MCF 10A (cell line): ENCODE measurements at regions of chr18 and their contacts with region 1.

Region 1: GRCh38 chr18:9102508-9103375 is at the start of gene NDUFV2:
- DNase-seq: peak; percentile 96
- H3K4me3 Mint-ChIP-seq: peak within 1 kb of the TSS; percentile 80
- H3K27ac Mint-ChIP-seq: peak within 1 kb of the TSS; percentile 86
- H3K4me1 Mint-ChIP-seq: peaks cover 43% of the 10 kb centered on the region
- H3K27me3 Mint-ChIP-seq: no peaks in the 10 kb centered on the region
- CTCF ChIP-seq: no peak
- total RNA-seq, gene NDUFV2: 192 and 202 TPM in 2 replicates

Region 2: DNA sequence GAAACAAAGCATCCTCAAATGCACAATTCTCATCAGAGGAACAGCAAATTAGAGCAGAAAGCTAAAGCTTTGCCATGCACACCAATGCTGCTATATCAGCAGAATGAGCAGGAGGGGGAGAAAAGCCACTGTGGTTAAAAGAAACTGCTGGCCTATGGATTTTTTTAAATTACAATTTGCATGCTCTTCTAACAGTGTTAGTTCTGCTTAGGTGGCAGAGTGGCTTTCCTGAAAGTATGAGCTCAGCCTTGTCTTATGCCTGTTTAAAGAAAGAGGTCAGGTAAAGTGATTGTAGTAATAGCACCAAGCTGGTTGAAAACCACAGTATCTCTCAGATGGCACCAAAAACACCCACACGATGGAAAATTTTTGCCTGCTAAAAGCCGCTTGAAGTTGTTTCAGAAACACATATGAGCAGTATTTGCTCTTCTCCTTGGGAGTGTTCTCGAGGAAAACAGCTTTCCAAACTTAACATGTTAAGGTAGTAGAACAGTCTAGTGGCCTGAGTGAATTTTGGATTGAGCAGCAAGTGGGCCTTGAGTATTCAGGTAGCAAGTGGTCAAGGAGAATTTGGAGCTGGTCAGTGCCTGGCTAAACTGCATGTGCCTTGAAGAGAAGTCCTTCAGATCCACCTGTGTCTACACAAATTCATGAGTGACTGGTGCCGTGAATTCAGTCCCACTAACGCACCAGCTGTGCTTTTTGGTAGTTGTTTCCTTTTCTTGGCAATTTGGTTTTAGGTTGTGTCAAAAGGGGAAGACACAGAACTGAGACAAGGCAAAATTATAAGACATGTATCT is 19.8 kb before region 1 on chr18:
- CTCF ChIA-PET with region 1: no interaction called
- POLR2A ChIA-PET with region 1: interaction called, 12 read pairs
- intact Hi-C with region 1: no loop called
- DNase-seq: no peak
- H3K4me3 Mint-ChIP-seq: no peak overlapping the region
- H3K27ac Mint-ChIP-seq: no peak overlapping the region
- H3K4me1 Mint-ChIP-seq: no peaks in the 10 kb centered on the region
- H3K27me3 Mint-ChIP-seq: no peaks in the 10 kb centered on the region
- CTCF ChIP-seq: no peak

Region 3: DNA sequence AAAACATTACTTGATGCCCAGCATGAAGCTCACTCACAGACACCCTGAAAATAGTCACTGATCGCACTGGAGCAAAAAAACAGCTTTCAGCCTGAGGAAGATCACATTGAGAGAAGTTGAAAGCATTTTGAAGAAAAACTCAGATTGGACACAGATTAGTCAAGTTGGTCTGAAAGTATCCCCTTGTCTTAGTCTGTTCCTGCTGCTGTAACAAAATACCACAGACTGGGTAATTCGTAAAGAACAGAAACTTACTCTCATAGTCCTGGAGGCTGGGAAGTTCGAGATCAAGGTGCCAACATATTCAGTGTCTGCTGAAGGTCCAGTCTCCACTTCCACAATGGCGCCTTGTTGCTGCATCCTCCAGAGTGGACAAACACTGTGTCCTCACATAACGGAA is 14.5 kb before region 1 on chr18:
- CTCF ChIA-PET with region 1: no interaction called
- POLR2A ChIA-PET with region 1: interaction called, 12 read pairs
- intact Hi-C with region 1: no loop called
- DNase-seq: no peak
- H3K4me3 Mint-ChIP-seq: no peak overlapping the region
- H3K27ac Mint-ChIP-seq: no peak overlapping the region
- H3K4me1 Mint-ChIP-seq: no peaks in the 10 kb centered on the region
- H3K27me3 Mint-ChIP-seq: no peaks in the 10 kb centered on the region
- CTCF ChIP-seq: no peak

Region 4: DNA sequence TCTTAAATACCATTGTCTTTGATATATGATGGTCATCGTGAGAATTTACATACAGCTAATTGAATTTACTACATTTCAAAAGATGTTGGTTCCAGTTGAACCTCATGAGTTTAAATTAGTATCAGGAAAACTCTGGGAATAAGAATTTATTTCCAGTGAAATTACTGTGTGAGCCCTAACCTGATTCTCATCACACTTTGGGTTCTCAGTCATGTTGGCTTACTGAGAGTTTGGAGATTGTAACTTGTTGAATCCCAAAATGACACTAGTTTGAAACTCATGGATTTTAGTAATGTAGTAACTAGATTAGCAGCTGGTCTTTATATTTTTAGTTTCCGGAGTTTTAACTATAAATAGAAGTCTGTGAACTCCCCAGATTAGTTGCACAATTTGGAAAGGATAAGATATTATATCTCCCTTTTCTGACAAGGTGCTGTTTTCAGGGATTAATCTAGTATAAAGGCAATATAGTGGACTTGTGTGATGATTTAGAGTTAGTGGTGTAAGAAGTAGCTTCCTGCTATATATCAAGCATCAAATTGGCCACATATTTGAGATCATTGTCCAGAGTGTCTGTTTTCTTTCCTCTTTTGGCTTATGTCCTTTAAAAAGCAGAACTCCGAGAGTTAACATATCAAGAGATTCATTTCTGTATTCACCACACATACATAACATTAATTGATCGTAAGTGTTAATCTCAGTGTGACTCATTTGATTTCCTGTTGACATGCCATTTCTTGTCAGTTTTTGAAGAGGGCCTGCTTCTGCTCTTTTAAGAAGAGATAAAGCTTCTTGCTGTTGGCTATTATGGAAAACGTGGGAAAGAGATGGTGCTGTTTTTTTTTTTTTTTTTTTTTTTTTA is 15.5 kb after region 1 on chr18:
- CTCF ChIA-PET with region 1: interaction called, 3 read pairs
- POLR2A ChIA-PET with region 1: interaction called, 228 read pairs
- intact Hi-C with region 1: loop called (anchors 2 kb)
- DNase-seq: peak; percentile 44
- H3K4me3 Mint-ChIP-seq: peak overlapping the region; percentile 52
- H3K27ac Mint-ChIP-seq: peak overlapping the region; percentile 98
- H3K4me1 Mint-ChIP-seq: peaks cover 37% of the 10 kb centered on the region
- H3K27me3 Mint-ChIP-seq: no peaks in the 10 kb centered on the region
- CTCF ChIP-seq: no peak

Region 5: DNA sequence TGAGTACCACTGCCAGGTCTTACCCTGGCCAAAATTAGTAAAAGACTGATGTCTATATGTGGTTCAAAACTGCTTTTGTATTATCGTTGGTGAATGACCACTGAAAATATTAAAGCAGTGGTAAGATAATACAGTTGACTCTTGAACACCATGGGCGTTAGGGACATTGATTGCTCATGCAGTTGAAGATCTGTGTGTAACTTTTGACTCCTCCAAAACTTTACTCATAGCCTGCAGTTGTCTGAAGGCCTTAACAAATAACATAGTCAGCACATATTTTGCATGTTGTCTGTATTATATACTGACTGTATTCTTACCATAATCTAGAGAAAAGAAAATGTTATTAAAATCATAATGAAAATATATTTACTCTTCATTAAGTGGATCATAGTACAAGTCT is 28.1 kb after region 1 on chr18:
- CTCF ChIA-PET with region 1: interaction called, 4 read pairs
- POLR2A ChIA-PET with region 1: interaction called, 586 read pairs
- intact Hi-C with region 1: loop called (anchors 1 kb)
- DNase-seq: no peak
- H3K4me3 Mint-ChIP-seq: no peak overlapping the region
- H3K27ac Mint-ChIP-seq: no peak overlapping the region
- H3K4me1 Mint-ChIP-seq: peaks cover 19% of the 10 kb centered on the region
- H3K27me3 Mint-ChIP-seq: no peaks in the 10 kb centered on the region
- CTCF ChIP-seq: no peak

Region 6: DNA sequence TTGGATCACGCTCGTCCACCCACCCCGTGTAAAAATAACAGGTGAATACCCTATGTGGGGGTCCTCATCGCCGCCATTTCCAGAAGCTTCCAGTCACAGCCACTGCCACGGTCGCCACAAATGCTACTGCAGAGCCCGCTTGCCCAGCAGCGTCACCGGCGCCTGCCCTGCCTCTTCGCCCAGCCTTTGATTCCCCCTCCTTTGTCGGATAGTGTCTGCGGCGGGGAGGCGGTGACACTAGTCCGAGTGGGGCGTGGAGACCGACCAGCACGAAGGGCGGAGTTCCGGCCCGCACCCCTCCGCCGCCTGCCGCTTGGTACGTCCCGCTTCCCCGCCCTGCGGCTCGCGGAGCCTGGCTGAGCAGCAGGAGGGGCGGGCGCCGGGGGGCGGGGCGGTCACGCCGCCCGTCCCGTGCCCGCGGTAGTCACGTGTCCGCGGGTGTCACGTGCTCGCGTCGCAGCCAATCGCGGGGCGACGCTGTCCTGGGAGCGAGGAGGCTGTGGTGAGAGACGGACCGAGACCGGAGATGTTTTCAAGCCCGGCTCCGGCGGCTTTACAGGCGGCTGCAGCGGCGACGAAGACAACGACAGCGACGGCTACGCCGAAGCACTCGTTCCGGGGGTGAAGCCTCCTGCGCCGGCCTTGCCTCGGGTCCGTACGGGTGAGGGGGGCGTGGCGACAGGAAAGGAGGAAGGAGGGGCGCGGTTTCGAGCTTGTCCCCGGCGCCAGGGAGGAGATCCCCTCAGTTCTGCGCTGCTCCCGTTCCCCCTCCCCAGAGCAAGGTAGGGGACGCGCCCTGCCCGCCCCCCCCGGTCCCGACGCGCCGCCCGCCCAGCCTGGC is 33.8 kb after region 1 on chr18 and contains the start of gene ANKRD12:
- CTCF ChIA-PET with region 1: interaction called, 10 read pairs
- POLR2A ChIA-PET with region 1: interaction called, 586 read pairs
- intact Hi-C with region 1: loop called (anchors 1 kb)
- DNase-seq: peak; percentile 95
- H3K4me3 Mint-ChIP-seq: peak within 1 kb of the TSS; percentile 90
- H3K27ac Mint-ChIP-seq: peak within 1 kb of the TSS; percentile 94
- H3K4me1 Mint-ChIP-seq: peaks cover 32% of the 10 kb centered on the region
- H3K27me3 Mint-ChIP-seq: no peaks in the 10 kb centered on the region
- CTCF ChIP-seq: no peak
- total RNA-seq, gene ANKRD12: 25.3 and 36.7 TPM in 2 replicates

Region 7: GRCh38 chr18:9147440-9148202 is 44.9 kb after region 1 on chr18:
- CTCF ChIA-PET with region 1: interaction called, 10 read pairs
- POLR2A ChIA-PET with region 1: interaction called, 586 read pairs
- intact Hi-C with region 1: no loop called
- DNase-seq: peak; percentile 79
- H3K4me3 Mint-ChIP-seq: no peak overlapping the region
- H3K27ac Mint-ChIP-seq: peak overlapping the region; percentile 66
- H3K4me1 Mint-ChIP-seq: peaks cover 29% of the 10 kb centered on the region
- H3K27me3 Mint-ChIP-seq: no peaks in the 10 kb centered on the region
- CTCF ChIP-seq: peak; percentile 66